Left ventricle myocardium inferior (tissue), 1 donor: ENCODE measurements at regions of chr22 and their contacts with region 1.

Region 1: DNA sequence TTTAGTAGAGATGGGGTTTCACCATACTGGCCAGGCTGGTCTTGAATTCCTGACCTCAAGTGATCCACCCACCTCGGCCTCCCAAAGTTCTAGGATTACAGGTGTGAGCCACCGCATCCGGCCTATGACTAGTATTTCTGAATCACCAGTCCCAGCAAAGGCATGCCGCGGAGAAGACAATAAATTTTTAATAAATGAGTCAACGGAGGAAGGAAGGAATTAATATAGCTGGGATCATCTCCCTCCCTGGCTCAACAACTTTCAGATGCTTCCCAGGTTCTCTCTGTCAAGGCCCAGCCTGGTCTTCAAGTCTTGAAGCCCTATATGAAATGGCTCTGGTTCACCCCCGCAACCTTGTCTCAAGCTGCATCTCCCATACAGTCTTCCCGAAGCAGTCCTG is 45.7 kb downstream of the CYTH4 start:
- DNase-seq: no peak
- H3K4me3 ChIP-seq: no peak overlapping the region
- H3K27ac ChIP-seq: no peak overlapping the region
- H3K4me1 ChIP-seq: peaks cover 6% of the 10 kb centered on the region
- H3K27me3 ChIP-seq: peaks cover 97% of the 10 kb centered on the region
- CTCF ChIP-seq: no peak

Region 2: GRCh38 chr22:37068859-37069258 is 259.2 kb before region 1 on chr22:
- intact Hi-C with region 1: no loop called
- DNase-seq: no peak
- H3K4me3 ChIP-seq: no peak overlapping the region
- H3K27ac ChIP-seq: no peak overlapping the region
- H3K4me1 ChIP-seq: no peaks in the 10 kb centered on the region
- H3K27me3 ChIP-seq: peaks cover 79% of the 10 kb centered on the region
- CTCF ChIP-seq: no peak

Region 3: DNA sequence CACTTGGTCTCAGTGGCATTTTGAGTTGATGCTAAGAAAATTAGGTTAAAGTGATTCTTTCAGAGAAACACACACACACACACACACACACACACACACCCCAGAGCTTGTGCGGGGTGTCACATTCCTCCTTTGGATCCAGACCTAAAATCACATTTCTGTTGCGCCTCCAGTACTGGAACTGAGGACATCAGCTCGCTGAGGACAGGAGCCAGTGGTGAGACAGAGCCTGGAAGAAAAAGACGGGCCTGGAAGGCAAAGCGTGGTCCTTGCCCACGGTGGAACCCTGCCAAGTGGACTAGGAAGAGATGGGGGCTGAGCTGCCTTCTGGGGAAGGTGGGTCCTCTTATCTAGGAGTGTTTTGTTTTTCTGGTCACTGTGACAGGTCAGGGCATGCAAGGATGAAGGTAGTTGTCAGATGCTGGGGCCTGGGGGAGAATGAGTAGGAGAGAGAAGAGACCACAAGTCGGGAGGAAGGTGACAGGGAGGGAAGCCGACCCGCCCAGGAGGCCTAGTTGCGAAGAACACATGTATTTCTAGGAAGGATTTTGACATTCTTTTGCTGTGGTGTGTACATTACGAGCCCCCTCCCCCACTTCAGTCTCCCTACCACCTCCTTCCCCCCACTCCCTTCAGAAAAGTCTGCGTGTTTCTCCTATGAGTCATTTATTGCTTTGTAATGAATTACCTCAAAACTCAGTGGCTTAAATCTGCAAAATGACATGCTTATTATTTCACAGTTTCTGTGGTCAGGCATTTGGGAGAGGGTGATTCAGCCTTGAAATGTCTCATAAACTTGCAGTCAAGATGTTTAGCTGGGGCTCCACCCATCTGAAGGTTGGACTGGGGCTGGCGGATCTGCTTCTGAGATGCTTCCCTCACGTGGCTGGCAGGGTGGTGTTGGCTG is 104.0 kb after region 1 on chr22:
- intact Hi-C with region 1: loop called (anchors 10 kb)
- DNase-seq: no peak
- H3K4me3 ChIP-seq: no peak overlapping the region
- H3K27ac ChIP-seq: no peak overlapping the region
- H3K4me1 ChIP-seq: peaks cover 11% of the 10 kb centered on the region
- H3K27me3 ChIP-seq: peaks cover 93% of the 10 kb centered on the region
- CTCF ChIP-seq: no peak